Activated CD4-positive, alpha-beta memory T cell treated with anti-CD3 and anti-CD28 coated beads, Interleukin-2, amount 10 ng/mL, durations not matched to agents 7 days and 5 days (primary cell): ENCODE measurements at regions of chr7 and their contacts with region 1.

Region 1: DNA sequence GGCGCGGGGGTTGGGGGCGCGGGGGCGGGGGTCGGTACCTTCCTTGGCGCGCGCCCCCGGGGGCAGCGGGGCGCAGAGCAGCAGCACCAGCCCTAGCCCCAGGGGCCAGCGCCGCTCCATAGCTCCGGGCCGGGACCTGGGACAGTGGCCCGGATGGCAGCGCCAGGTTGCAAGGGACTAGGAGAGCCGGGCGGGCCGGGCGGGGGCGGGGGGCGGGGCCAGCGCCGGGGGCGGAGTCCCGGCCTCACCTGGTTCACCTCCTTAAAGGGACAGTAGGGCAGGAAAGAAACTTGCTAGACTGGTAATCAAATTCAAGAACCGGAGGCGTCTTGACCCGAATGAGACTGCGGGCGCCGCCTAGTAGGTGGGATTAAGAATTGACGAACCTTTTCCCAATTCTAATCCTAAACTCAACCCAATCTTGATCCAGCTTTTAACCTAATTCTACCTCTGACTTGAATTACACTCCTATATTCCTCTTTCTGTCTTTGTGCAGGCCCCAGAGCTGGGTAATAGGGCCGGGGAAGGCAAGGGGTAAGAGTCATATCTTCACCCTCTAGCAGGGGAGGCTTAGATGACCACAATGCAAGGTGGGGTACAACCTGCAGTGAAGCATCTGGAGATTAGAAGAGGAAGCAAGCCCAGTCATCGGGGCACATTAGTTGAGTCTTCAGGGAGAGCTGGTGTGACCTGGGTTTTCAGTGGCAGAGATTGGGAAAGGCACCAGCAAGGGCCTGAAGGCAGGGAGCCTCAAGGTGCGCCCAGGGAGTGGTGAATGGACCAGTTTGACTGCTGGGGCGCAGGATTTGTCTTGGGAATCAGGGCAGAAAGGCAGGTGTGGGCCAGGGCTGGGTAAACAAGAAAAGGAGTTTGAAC is at the start of gene EPHA1:
- DNase-seq: peak; percentile 35
- H3K4me3 Mint-ChIP-seq: peak within 1 kb of the TSS; percentile 62
- H3K27ac Mint-ChIP-seq: no peak within 1 kb of the TSS
- H3K4me1 Mint-ChIP-seq: peaks cover 33% of the 10 kb centered on the region
- H3K27me3 Mint-ChIP-seq: peaks cover 12% of the 10 kb centered on the region
- total RNA-seq, gene EPHA1: 1.1 to 1.2 TPM

Region 2: GRCh38 chr7:143385891-143386781 is 22.8 kb before region 1 on chr7:
- CTCF ChIA-PET with region 1: interaction called, 7 read pairs
- POLR2A ChIA-PET with region 1: interaction called, 20 read pairs
- DNase-seq: peak; percentile 64
- H3K4me3 Mint-ChIP-seq: no peak overlapping the region
- H3K27ac Mint-ChIP-seq: no peak overlapping the region
- H3K4me1 Mint-ChIP-seq: peaks cover 21% of the 10 kb centered on the region
- H3K27me3 Mint-ChIP-seq: no peaks in the 10 kb centered on the region

Region 3: GRCh38 chr7:143391462-143392404 is 17.2 kb before region 1 on chr7:
- CTCF ChIA-PET with region 1: interaction called, 5 read pairs
- POLR2A ChIA-PET with region 1: interaction called, 35 read pairs
- DNase-seq: no peak
- H3K4me3 Mint-ChIP-seq: no peak overlapping the region
- H3K27ac Mint-ChIP-seq: no peak overlapping the region
- H3K4me1 Mint-ChIP-seq: peaks cover 31% of the 10 kb centered on the region
- H3K27me3 Mint-ChIP-seq: no peaks in the 10 kb centered on the region

Region 4: GRCh38 chr7:143458263-143458662 is 49.3 kb after region 1 on chr7:
- CTCF ChIA-PET with region 1: no interaction called
- POLR2A ChIA-PET with region 1: no interaction called
- DNase-seq: no peak
- H3K4me3 Mint-ChIP-seq: no peak overlapping the region
- H3K27ac Mint-ChIP-seq: no peak overlapping the region
- H3K4me1 Mint-ChIP-seq: no peaks in the 10 kb centered on the region
- H3K27me3 Mint-ChIP-seq: no peaks in the 10 kb centered on the region